Posterior cingulate gyrus (tissue), 11 donors: ENCODE measurements at regions of chr2 and their contacts with region 1.

Region 1: DNA sequence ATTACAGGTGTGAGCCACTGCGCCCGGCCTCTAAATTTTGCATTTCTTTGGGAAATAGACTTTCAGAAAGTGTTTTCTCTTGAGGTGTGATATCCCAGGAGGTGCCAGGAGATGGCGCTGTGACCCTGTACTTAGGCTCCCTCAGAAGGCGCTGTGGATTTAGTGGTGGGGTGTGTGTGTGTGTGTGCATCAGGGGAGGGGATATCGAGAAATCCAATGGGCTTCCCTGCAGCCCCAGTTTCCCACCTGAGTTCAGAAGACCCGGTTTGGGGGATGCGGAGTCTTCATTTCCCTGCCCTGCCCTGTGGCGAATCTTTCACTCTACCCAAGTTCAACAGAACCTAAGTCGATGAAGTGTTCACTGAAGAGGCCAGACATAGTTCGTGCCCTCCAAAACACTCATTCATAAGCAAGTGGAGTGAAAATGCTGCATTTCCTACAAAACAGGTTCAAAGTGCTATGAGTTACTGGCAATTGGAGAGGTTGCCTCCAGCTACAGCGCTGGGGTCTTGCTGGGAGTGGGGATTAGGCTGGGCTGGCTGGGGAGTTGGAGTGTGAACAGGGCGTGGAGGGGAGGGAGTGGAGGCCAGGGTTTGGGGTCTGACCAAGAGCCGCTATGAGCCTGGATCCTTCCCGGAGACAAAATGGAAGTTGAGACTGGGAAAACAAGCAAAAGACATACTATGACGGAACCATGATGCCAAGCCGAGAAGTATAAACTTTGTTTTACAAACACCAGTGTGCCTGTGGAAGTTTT is 6.5 kb upstream of the WNT6 start:
- DNase-seq: peak in 7 of 10 donors; percentile 60 to 94 (median 65)

Region 2: GRCh38 chr2:218727502-218728165 is 125.5 kb before region 1 on chr2:
- intact Hi-C with region 1: loop called (anchors 5 kb)
- DNase-seq: no peak

Region 3: DNA sequence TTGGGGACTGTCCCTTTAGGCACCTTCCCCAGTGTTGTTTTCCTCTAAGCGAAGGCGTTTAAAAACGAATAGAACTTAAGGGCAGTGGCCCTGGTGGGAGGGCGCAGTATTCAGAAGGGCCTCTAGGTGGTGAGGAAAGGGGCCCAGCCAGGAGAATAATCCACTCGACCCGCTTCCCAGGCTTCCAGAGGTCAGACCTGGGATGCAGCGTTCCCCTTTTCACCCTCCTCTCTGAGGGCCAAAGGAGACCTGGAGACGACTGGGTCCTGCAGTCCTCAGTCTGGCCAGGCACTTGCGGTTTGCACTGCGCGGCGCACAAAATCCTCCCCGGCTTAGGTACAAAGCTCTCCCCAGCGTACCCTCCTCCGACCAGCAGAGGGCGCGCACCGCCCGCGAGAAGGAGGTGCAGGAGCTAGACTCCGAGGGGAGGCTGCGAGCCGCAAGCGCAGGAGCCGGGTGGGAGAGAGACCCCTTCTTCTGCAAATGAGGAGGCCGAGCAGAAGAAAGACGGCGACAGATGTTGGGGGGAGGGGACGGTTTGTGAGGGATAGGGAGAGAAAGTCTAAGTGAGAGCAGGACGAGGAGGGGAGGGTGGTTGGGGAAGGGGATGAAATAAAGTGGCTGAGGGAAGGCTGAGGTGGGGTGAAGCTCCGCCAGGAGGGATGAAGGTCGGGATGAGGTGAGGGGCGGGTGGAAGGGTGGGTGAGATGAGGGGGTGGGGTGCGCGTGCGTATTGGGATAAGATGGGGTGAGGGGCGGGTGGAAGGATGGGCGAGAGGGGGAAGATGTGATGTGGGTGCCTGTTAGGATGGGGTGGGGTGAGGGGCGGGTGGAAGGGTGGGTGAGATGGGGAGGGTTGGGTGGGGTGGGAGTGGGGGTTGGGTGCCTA is 127.0 kb after region 1 on chr2:
- intact Hi-C with region 1: loop called (anchors 10 kb)
- DNase-seq: peak; percentile 63 to 97 (median 88)